CD8-positive, alpha-beta T cell (primary cell): ENCODE measurements at regions of chr9 and their contacts with region 1.

Region 1: DNA sequence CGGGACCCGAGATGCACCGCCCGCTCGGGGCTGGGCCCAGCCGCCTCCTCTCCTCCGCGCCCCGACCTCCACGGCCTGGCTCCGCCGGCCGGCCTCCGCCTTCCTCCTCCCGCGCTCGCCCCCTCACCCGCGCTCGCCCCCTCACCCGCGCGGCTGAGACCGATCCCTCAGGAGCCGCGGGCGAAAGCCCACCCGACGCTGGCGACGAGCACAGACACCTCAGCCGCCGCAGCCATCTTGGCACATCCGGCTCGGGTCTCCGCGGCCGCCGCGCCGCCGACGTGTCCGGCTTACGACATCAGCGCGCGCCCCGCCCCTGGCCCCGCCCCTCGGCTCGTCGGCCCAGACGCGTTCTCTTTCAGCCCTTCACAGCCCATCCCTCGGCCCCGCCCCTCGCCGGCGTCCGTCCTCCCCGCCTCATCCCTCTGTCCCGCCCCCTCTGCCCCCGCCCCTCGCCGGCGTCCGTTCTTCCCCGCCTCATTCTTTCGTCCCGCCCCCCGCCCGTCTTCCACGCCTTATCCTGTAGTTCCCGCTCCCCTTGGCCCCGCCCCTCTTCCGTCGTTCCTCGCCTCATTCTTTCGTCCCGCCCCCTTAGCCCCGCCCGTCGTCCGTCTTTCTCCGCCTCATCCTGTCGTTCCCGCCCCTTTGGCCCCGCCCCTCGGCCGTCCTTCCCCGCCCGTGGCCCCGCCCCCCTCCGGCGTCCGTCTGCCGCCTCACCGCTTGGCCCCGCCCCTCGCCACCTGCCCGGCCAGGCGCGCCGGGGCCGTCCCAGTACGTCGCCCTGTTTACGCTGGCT is at the start of gene SEC16A:
- DNase-seq: peak; percentile 98 to 100 (median 99)
- ATAC-seq: peak; percentile 75
- H3K4me3 ChIP-seq: peak within 1 kb of the TSS; percentile 72 to 97
- H3K4me3 Mint-ChIP-seq: peak within 1 kb of the TSS; percentile 98
- H3K27ac ChIP-seq: peak within 1 kb of the TSS; percentile 97 to 99
- H3K27ac Mint-ChIP-seq: peak within 1 kb of the TSS; percentile 99
- H3K4me1 ChIP-seq: peaks cover 29% of the 10 kb centered on the region
- H3K4me1 Mint-ChIP-seq: peaks cover 37% of the 10 kb centered on the region
- H3K27me3 ChIP-seq: no peaks in the 10 kb centered on the region
- H3K27me3 Mint-ChIP-seq: no peaks in the 10 kb centered on the region
- CTCF ChIP-seq: no peak
- total RNA-seq, gene SEC16A: 81.0 to 83.5 TPM

Region 2: GRCh38 chr9:136363606-136364370 is 119.2 kb before region 1 on chr9 and contains the start of gene DNLZ:
- CTCF ChIA-PET with region 1: interaction called, 3 read pairs
- POLR2A ChIA-PET with region 1: no interaction called
- intact Hi-C with region 1: loop called (anchors 1 kb)
- DNase-seq: peak; percentile 67 to 94 (median 86)
- ATAC-seq: peak; percentile 77
- H3K4me3 ChIP-seq: peak within 1 kb of the TSS; percentile 51 to 72
- H3K4me3 Mint-ChIP-seq: peak within 1 kb of the TSS; percentile 83
- H3K27ac ChIP-seq: peak within 1 kb of the TSS; percentile 53 to 70
- H3K27ac Mint-ChIP-seq: peak within 1 kb of the TSS; percentile 73
- H3K4me1 ChIP-seq: peaks cover 6% of the 10 kb centered on the region
- H3K4me1 Mint-ChIP-seq: peaks cover 9% of the 10 kb centered on the region
- H3K27me3 ChIP-seq: no peaks in the 10 kb centered on the region
- H3K27me3 Mint-ChIP-seq: no peaks in the 10 kb centered on the region
- CTCF ChIP-seq: peak; percentile 97
- total RNA-seq, gene DNLZ: 21.0 to 22.1 TPM

Region 3: DNA sequence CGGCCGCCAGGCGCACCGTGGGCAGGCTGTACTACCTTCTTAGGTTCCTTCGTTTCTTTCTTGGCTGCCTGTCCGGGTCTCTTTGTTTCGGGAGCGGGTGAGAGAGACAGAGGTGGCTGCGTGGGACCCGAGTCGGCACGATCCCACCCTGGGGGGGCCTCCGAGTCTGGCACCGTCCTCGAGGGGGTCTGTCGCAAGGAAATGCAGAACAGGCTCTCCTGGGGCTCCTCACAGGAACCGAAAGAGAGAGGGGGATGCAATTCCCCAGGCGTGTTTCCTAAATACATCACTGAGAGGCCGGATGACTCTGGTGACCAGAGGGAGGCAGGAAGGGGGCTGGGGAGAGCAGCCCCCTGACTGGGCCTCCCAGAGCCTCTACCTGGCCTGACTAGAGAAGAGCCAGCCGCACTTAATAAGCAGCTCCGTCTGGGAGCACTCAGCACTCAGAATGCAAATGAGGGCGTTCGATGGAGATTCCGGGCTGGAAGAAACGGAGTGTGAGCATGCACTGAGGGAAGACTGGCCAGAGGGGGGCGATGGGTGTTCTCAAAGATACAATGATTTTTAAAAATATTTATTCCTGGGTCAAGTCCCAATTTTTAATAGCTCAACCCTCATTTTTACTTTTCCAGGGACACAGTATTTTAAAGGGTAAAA is 31.6 kb before region 1 on chr9:
- CTCF ChIA-PET with region 1: no interaction called
- POLR2A ChIA-PET with region 1: no interaction called
- intact Hi-C with region 1: no loop called
- DNase-seq: peak in 1 of 9 experiments; percentile 1
- ATAC-seq: no peak
- H3K4me3 ChIP-seq: no peak overlapping the region
- H3K4me3 Mint-ChIP-seq: no peak overlapping the region
- H3K27ac ChIP-seq: no peak overlapping the region
- H3K27ac Mint-ChIP-seq: no peak overlapping the region
- H3K4me1 ChIP-seq: no peaks in the 10 kb centered on the region
- H3K4me1 Mint-ChIP-seq: no peaks in the 10 kb centered on the region
- H3K27me3 ChIP-seq: no peaks in the 10 kb centered on the region
- H3K27me3 Mint-ChIP-seq: no peaks in the 10 kb centered on the region
- CTCF ChIP-seq: no peak

Region 4: DNA sequence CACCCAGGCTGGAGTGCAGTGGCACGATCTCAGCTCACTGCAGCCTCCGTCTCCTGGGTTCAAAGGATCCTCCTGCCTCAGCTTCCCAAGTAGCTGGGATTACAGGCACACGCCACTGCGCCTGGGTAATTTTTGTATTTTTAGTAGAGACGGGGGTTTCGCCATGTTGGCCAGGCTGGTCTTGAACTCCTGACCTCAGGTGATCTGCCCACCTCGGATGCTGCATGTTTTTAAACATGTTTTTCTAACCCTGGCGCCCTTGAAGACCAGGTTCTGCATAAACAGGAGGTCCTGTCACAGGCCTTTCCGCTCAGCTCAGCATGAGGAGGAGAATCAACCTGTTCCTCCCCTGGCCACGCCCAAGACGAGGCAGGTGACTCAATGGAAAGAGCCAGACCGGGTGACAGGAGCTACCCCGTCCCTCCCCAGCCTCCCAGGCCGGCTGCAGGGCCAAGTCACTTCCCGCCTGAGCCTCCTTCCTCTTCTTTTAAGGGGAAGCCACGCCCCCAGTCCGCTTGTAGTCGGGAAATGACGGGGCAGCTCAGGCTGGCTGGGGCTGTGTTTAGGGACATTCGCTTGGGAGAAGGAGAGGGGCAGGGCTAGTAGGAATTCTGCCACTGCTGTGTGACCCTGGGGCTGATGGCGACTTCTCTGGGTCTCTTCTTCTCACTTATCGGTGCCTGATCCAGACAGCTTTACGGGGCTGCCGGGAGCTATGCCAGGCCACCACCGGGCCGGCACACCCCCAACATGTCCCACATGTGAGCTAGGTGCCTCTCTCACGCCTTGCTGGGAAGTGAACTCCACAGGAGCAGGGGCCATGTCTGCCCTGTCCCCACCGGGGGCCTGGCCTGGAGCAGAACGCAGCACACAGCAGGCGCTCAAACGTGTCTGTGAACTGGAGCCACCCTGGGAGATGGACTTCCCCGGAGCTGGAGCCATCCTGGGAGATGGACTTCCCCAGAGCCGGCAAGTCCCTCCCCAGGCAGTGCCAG is 56.7 kb after region 1 on chr9:
- CTCF ChIA-PET with region 1: interaction called, 16 read pairs
- POLR2A ChIA-PET with region 1: interaction called, 8 read pairs
- intact Hi-C with region 1: loop called in 1 of 2 experiments (anchors 1 kb)
- DNase-seq: peak; percentile 49 to 94 (median 86)
- ATAC-seq: peak; percentile 70
- H3K4me3 ChIP-seq: peak overlapping the region; percentile 30 to 58
- H3K4me3 Mint-ChIP-seq: peak overlapping the region; percentile 85
- H3K27ac ChIP-seq: peak overlapping the region; percentile 73 to 95
- H3K27ac Mint-ChIP-seq: peak overlapping the region; percentile 97
- H3K4me1 ChIP-seq: peaks cover 80% of the 10 kb centered on the region
- H3K4me1 Mint-ChIP-seq: peaks cover 59% of the 10 kb centered on the region
- H3K27me3 ChIP-seq: no peaks in the 10 kb centered on the region
- H3K27me3 Mint-ChIP-seq: no peaks in the 10 kb centered on the region
- CTCF ChIP-seq: no peak

Region 5: GRCh38 chr9:136644598-136645351 is 161.8 kb after region 1 on chr9:
- CTCF ChIA-PET with region 1: interaction called, 52 read pairs
- POLR2A ChIA-PET with region 1: no interaction called
- intact Hi-C with region 1: loop called (anchors 1 kb)
- DNase-seq: peak in 8 of 9 experiments; percentile 47 to 81 (median 70)
- ATAC-seq: peak; percentile 99
- H3K4me3 ChIP-seq: no peak overlapping the region
- H3K4me3 Mint-ChIP-seq: no peak overlapping the region
- H3K27ac ChIP-seq: no peak overlapping the region
- H3K27ac Mint-ChIP-seq: no peak overlapping the region
- H3K4me1 ChIP-seq: peaks cover 10% of the 10 kb centered on the region
- H3K4me1 Mint-ChIP-seq: no peaks in the 10 kb centered on the region
- H3K27me3 ChIP-seq: peaks cover 12 to 30% of the 10 kb centered on the region in 2 experiments
- H3K27me3 Mint-ChIP-seq: peaks cover 28% of the 10 kb centered on the region
- CTCF ChIP-seq: peak; percentile 82

Region 6: GRCh38 chr9:136807281-136808074 is 324.5 kb after region 1 on chr9 and contains the start of gene RABL6:
- CTCF ChIA-PET with region 1: no interaction called
- POLR2A ChIA-PET with region 1: no interaction called
- intact Hi-C with region 1: loop called in 1 of 2 experiments (anchors 5 kb)
- DNase-seq: peak; percentile 64 to 92 (median 81)
- ATAC-seq: peak; percentile 85
- H3K4me3 ChIP-seq: peak within 1 kb of the TSS; percentile 78 to 92
- H3K4me3 Mint-ChIP-seq: peak within 1 kb of the TSS; percentile 88
- H3K27ac ChIP-seq: peak within 1 kb of the TSS; percentile 66 to 79
- H3K27ac Mint-ChIP-seq: peak within 1 kb of the TSS; percentile 89
- H3K4me1 ChIP-seq: peaks cover 26% of the 10 kb centered on the region
- H3K4me1 Mint-ChIP-seq: peaks cover 34% of the 10 kb centered on the region
- H3K27me3 ChIP-seq: no peaks in the 10 kb centered on the region
- H3K27me3 Mint-ChIP-seq: no peaks in the 10 kb centered on the region
- CTCF ChIP-seq: no peak
- total RNA-seq, gene RABL6: 53.3 to 55.5 TPM

Region 7: GRCh38 chr9:137223078-137223970 is 740.3 kb after region 1 on chr9:
- CTCF ChIA-PET with region 1: no interaction called
- POLR2A ChIA-PET with region 1: no interaction called
- intact Hi-C with region 1: loop called in 1 of 2 experiments (anchors 2 kb)
- DNase-seq: peak; percentile 95 to 99 (median 97)
- ATAC-seq: peak; percentile 93
- H3K4me3 ChIP-seq: peak overlapping the region; percentile 75 to 88
- H3K4me3 Mint-ChIP-seq: peak overlapping the region; percentile 83
- H3K27ac ChIP-seq: peak overlapping the region; percentile 69 to 86
- H3K27ac Mint-ChIP-seq: peak overlapping the region; percentile 81
- H3K4me1 ChIP-seq: peaks cover 19% of the 10 kb centered on the region
- H3K4me1 Mint-ChIP-seq: peaks cover 8% of the 10 kb centered on the region
- H3K27me3 ChIP-seq: peaks cover 0 to 5% of the 10 kb centered on the region in 2 experiments
- H3K27me3 Mint-ChIP-seq: peaks cover 3% of the 10 kb centered on the region
- CTCF ChIP-seq: no peak